Transverse colon (tissue), 4 donors: ENCODE measurements at regions of chr12 and their contacts with region 1.

Region 1: GRCh38 chr12:22334410-22335290 is at the start of gene ST8SIA1:
- DNase-seq: peak; percentile 43
- H3K4me3 ChIP-seq: peak within 1 kb of the TSS; percentile 18 to 67 (median 47)
- H3K27ac ChIP-seq: peak within 1 kb of the TSS; percentile 72 to 76 (median 76)
- H3K4me1 ChIP-seq: peaks cover 0 to 21% (median 9%) of the 10 kb centered on the region in 4 donors
- H3K27me3 ChIP-seq: peaks cover 31% of the 10 kb centered on the region
- CTCF ChIP-seq: no peak
- EP300 ChIP-seq: no peak
- POLR2A ChIP-seq: no peak
- total RNA-seq, gene ST8SIA1: 1.4 to 4.5 (median 3.9) TPM

Region 2: DNA sequence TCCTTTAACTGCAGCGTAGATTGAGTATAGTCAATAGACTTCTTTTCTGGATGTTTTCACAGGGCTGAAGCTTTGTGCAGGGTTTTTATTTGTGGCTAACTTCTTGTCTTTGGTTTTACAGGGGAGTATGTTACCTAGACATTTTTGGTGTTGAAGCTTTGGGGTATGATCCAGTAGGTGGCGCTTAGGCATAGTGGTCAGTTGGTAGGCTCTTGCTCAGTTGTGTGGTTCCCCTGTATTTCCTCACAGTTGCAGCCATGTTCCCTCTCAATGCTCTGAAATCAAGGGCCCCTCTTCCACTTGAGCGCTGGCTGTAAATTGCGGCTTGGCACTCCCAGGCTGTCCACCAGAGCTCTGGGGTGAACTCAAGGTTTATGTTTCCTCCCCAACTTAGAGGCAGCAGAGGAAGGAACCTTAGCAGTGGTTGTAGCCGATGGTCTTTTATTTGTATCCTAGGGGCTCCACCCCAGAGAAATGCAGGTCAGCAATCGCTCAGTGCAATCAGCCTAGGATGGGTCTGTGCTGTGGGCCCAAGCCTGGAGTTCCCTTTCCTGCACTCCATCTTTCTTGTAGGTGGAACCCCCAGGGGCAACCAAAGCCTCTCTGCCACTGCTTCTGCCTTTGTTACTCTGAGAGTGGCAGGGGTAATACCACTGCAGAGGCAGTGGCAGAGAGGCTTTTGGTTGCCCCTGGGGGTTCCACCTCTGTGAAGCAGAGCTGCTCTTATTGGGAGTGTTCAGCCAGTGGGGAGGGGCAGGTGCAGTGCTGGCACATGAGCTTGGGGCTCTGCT is 233.5 kb before region 1 on chr12:
- in situ Hi-C with region 1: loop called (anchors 10 kb)
- intact Hi-C with region 1: loop called (anchors 5 kb)
- DNase-seq: peak; percentile 31
- H3K4me3 ChIP-seq: no peak overlapping the region
- H3K27ac ChIP-seq: no peak overlapping the region
- H3K4me1 ChIP-seq: no peaks in the 10 kb centered on the region
- H3K27me3 ChIP-seq: no peaks in the 10 kb centered on the region
- CTCF ChIP-seq: peak; percentile 42 to 53 (median 51)
- EP300 ChIP-seq: no peak
- POLR2A ChIP-seq: no peak

Region 3: GRCh38 chr12:22443379-22444316 is 109.0 kb after region 1 on chr12:
- in situ Hi-C with region 1: no loop called
- intact Hi-C with region 1: loop called (anchors 10 kb)
- DNase-seq: peak; percentile 54
- H3K4me3 ChIP-seq: no peak overlapping the region
- H3K27ac ChIP-seq: no peak overlapping the region
- H3K4me1 ChIP-seq: no peaks in the 10 kb centered on the region
- H3K27me3 ChIP-seq: no peaks in the 10 kb centered on the region
- CTCF ChIP-seq: peak; percentile 66 to 79 (median 73)
- EP300 ChIP-seq: no peak
- POLR2A ChIP-seq: no peak